Astrocyte of the cerebellum (primary cell): ENCODE measurements at regions of chr12 and their contacts with region 1.

Region 1: GRCh38 chr12:52091869-52092268 is 12.4 kb downstream of the SMIM41 start:
- DNase-seq: no peak
- H3K4me3 ChIP-seq: no peak overlapping the region
- CTCF ChIP-seq: no peak

Region 2: DNA sequence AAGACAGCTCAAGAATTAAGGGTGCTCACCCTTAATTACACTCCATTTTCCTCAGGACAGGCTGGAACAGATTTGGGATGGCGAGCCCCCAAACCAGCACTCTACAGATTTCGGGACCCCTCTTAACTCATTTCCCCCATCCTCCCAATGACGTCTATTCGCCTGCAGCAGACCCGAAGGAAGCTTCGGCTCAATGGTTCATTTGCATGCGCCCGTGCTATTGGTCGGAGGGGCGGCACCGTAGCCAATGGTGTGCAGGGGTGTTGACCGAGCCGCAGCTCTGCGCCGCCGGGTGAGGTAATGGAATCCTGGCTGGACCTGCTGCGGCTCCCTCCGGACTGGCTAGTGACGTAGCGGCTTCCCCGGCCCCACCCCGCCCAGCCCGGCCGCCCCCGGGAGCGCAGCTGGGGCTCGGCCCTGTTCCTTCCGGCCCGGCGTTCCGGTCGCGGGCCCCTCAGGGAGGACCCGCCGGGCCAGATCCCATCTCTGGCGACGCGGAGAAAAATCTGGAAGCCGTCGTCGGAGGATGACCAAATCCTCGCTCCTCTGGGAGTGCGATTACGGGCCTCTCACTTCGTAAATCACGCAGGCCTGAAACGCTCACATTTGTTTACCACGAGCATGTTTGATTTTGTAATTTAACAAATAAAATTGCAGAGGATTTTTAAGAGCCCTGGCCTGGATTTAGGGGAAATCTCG is 58.9 kb before region 1 on chr12:
- in situ Hi-C with region 1: loop called (anchors 5 kb)
- DNase-seq: peak; percentile 92
- H3K4me3 ChIP-seq: peak overlapping the region; percentile 37
- CTCF ChIP-seq: no peak

Region 3: DNA sequence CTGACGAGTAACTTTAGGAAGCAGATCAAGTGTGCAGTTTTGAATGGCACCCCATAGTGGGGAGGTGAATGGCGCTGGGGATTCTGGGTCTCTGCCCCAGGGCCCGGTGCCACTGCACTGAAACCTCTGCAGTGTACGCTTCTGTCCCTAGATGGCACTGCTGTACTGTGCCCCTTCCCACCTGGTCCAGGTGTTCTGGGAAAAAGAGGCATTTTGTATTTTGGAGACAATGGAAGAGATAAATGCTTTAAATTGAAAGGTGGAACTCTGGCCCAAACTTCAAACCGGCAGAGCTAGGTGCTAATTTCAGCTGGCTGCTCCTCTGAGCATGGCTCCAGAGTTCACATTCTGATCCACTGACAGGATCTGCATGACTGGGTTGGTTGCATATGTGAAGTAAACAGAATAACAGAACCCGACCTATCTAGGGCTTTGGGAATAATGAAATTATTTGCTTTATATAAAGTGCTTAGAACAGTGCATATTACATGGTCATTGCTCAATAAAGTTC is 47.7 kb after region 1 on chr12:
- in situ Hi-C with region 1: loop called (anchors 5 kb)
- DNase-seq: no peak
- H3K4me3 ChIP-seq: no peak overlapping the region
- CTCF ChIP-seq: peak; percentile 85